ENCODE measurements at regions of chr5 and their contacts with region 1.

Region 1: DNA sequence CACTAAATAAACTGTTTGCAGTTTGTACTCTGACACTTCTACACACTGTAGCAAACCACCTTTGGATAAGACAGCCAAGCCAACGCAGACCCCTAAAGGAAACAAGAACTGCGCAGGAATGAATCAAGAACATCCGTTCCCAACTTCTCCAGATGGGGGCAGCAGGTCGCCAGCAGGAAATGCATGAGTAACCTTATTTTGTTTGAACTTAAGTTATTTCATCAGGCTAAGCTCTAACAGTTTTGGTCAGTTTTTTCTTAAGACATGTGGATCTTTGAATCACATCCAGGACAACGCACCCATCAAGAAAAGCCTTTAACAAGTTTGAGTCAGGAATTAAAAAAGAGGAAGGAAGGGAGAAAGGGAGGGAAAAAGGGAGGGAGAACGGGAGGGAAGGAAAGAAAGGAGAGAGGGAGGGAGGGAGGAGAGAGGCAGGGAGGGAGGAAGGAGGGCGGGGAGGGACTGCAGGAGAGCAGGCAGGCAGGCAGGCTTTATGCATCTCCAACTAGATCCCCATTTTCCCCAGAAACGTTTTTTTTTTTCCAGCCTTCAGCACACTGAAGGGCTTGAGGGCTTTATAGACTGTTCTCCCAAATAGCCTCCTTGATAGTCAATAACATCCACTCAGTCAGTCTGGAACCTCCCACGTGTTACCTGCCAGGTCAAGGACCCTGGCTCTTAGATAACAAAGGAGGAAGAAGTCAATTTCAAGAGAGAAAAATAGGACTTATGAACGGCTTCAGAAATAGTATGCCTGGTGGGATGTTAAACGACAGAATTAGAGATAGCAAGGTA is 22.2 kb downstream of the BHMT start:
- DNase-seq: peak; percentile 55
- ATAC-seq: peak; percentile 88 to 92
- H3K4me3 ChIP-seq: peak overlapping the region; percentile 24
- H3K27ac ChIP-seq: no peak overlapping the region
- H3K4me1 ChIP-seq: peaks cover 7% of the 10 kb centered on the region
- H3K27me3 ChIP-seq: no peaks in the 10 kb centered on the region
- CTCF ChIP-seq: peak; percentile 66

Region 2: DNA sequence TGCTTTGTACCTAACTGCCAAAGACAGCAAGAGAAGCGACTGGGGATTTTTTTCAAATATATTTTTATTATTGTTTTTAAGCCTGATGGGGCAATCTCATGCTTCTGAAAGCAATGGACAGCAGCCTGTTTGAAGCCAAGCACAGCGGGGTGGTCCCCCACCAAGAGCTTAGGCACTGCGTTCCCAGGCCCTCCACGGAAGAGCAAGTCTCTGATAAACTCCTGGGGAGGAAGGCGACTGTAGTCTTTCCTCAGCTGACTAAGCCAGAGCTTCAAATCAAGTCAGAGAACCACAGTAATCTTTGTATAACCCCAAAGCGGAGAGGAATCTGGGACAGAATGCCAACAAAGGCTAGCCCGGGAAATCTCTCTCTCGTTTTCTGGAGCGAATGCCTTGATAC is 203.1 kb before region 1 on chr5:
- intact Hi-C with region 1: no loop called
- DNase-seq: no peak
- ATAC-seq: no peak
- H3K4me3 ChIP-seq: no peak overlapping the region
- H3K27ac ChIP-seq: no peak overlapping the region
- H3K4me1 ChIP-seq: no peaks in the 10 kb centered on the region
- H3K27me3 ChIP-seq: no peaks in the 10 kb centered on the region
- CTCF ChIP-seq: no peak

Region 3: GRCh38 chr5:79464695-79465332 is 331.0 kb after region 1 on chr5:
- intact Hi-C with region 1: loop called (anchors 10 kb)
- DNase-seq: no peak
- ATAC-seq: peak in 1 of 2 donors; percentile 65
- H3K4me3 ChIP-seq: no peak overlapping the region
- H3K27ac ChIP-seq: no peak overlapping the region
- H3K4me1 ChIP-seq: peaks cover 8% of the 10 kb centered on the region
- H3K27me3 ChIP-seq: no peaks in the 10 kb centered on the region
- CTCF ChIP-seq: peak; percentile 61